ENCODE measurements at regions of chr16 and their contacts with region 1.

Region 1: GRCh38 chr16:31458844-31459721 is at the start of gene ARMC5:
- DNase-seq: peak; percentile 91 to 99 (median 95)
- ATAC-seq: peak; percentile 72
- H3K4me3 ChIP-seq: peak within 1 kb of the TSS; percentile 97
- H3K4me3 Mint-ChIP-seq: peak within 1 kb of the TSS; percentile 94
- H3K27ac ChIP-seq: peak within 1 kb of the TSS; percentile 98 to 99
- H3K27ac Mint-ChIP-seq: peak within 1 kb of the TSS; percentile 98
- H3K4me1 ChIP-seq: peaks cover 56% of the 10 kb centered on the region
- H3K4me1 Mint-ChIP-seq: peaks cover 49% of the 10 kb centered on the region
- H3K27me3 ChIP-seq: no peaks in the 10 kb centered on the region
- H3K27me3 Mint-ChIP-seq: no peaks in the 10 kb centered on the region
- CTCF ChIP-seq: peak; percentile 71
- total RNA-seq, gene ARMC5: 8.5 to 10.8 TPM

Region 2: GRCh38 chr16:31073968-31074813 is 384.9 kb before region 1 on chr16 and contains the starts of genes ZNF646 and ZNF668:
- CTCF ChIA-PET with region 1: no interaction called
- POLR2A ChIA-PET with region 1: interaction called, 28 read pairs
- intact Hi-C with region 1: loop called in 1 of 2 experiments (anchors 2 kb)
- DNase-seq: peak; percentile 94 to 100 (median 97)
- ATAC-seq: peak; percentile 81
- H3K4me3 ChIP-seq: peak within 1 kb of the TSS; percentile 96
- H3K4me3 Mint-ChIP-seq: peak within 1 kb of the TSS; percentile 98
- H3K27ac ChIP-seq: peak within 1 kb of the TSS; percentile 93 to 95
- H3K27ac Mint-ChIP-seq: peak within 1 kb of the TSS; percentile 92
- H3K4me1 ChIP-seq: peaks cover 35% of the 10 kb centered on the region
- H3K4me1 Mint-ChIP-seq: peaks cover 34% of the 10 kb centered on the region
- H3K27me3 ChIP-seq: no peaks in the 10 kb centered on the region
- H3K27me3 Mint-ChIP-seq: no peaks in the 10 kb centered on the region
- CTCF ChIP-seq: no peak
- total RNA-seq, gene ZNF646: 14.3 to 16.6 TPM
- total RNA-seq, gene ZNF668: 4.5 to 6.0 TPM

Region 3: GRCh38 chr16:31142109-31143010 is 316.7 kb before region 1 on chr16:
- CTCF ChIA-PET with region 1: interaction called, 9 read pairs
- POLR2A ChIA-PET with region 1: interaction called, 20 read pairs
- intact Hi-C with region 1: no loop called
- DNase-seq: peak; percentile 88 to 100 (median 96)
- ATAC-seq: peak; percentile 86
- H3K4me3 ChIP-seq: peak overlapping the region; percentile 41
- H3K4me3 Mint-ChIP-seq: peak overlapping the region; percentile 84
- H3K27ac ChIP-seq: peak overlapping the region; percentile 29 to 76
- H3K27ac Mint-ChIP-seq: peak overlapping the region; percentile 84
- H3K4me1 ChIP-seq: peaks cover 23% of the 10 kb centered on the region
- H3K4me1 Mint-ChIP-seq: peaks cover 13% of the 10 kb centered on the region
- H3K27me3 ChIP-seq: no peaks in the 10 kb centered on the region
- H3K27me3 Mint-ChIP-seq: peaks cover under 1% of the 10 kb centered on the region
- CTCF ChIP-seq: peak; percentile 79

Region 4: DNA sequence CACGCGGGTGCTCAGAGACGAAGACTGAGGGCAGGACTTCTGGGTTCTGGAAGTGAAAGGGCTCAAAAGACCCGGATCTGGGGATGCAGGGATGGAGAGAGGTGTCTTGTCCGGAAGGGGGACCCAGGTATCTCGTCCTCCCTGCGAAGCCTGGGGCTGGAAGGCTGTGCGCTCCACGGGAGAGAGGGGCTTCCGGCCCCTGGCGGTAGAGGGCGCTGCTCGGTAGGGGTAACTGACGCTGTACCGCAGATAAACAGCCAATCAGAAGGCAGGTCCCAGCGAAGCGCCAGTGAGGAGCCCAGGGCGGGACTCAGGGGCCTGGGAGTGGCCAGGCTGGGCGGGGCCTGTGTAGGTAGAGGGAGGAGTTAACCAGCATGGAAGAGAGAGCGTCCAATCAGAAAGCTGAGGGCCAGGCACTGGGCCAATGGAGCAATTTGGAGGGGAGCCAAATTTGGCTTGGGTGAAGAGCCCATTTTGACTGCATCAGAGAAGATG is 13.7 kb after region 1 on chr16:
- CTCF ChIA-PET with region 1: interaction called, 6 read pairs
- POLR2A ChIA-PET with region 1: interaction called, 69 read pairs
- intact Hi-C with region 1: loop called (anchors 1 to 2 kb)
- DNase-seq: peak in 5 of 14 experiments; percentile 38 to 72 (median 51)
- ATAC-seq: peak; percentile 23
- H3K4me3 ChIP-seq: no peak overlapping the region
- H3K4me3 Mint-ChIP-seq: peak overlapping the region; percentile 76
- H3K27ac ChIP-seq: no peak overlapping the region
- H3K27ac Mint-ChIP-seq: no peak overlapping the region
- H3K4me1 ChIP-seq: peaks cover 51% of the 10 kb centered on the region
- H3K4me1 Mint-ChIP-seq: peaks cover 25% of the 10 kb centered on the region
- H3K27me3 ChIP-seq: peaks cover 10 to 24% of the 10 kb centered on the region in 2 experiments
- H3K27me3 Mint-ChIP-seq: peaks cover 13% of the 10 kb centered on the region
- CTCF ChIP-seq: no peak

Region 5: DNA sequence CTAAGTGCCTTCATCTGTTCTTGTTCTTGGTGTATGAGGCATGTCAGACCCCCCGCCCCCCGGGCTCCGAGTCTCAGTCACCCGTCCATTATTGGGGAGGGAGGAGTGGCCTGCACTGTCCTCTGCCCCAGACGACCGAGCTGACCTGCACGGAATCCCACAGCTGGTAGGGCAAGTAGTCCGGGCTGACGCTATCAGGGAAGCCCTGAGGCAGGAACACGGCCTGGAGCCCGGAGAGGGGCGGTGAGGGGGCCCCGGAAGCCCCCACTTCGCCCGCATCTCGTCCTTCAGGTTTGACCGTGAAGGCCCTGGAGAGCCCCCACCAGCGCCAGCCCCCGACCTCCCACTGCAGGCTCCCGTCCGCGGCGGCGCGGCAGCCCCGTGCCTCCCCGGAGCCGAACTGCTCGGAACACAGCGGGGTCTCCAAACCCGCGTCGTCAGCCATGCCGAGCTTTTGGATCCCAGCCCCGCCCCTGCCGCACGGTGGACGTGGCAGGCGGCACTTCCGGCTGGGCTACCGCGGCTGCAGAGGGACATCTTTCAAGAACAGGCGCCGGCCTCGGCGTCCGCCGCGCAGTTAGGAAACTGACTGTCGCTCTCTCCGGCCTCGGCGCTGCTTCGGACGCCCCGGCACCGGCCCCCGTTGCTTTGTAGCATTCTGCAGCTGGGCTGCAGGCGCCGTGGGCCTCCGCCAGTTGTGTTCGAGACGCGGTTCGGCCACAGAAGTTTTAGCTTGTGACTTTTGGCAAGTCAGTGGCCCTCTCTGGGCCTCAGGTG is 49.0 kb after region 1 on chr16 and contains the start of gene RUSF1:
- CTCF ChIA-PET with region 1: interaction called, 4 read pairs
- POLR2A ChIA-PET with region 1: interaction called, 49 read pairs
- intact Hi-C with region 1: loop called (anchors 1 to 2 kb)
- DNase-seq: peak; percentile 65 to 89 (median 80)
- ATAC-seq: peak; percentile 87
- H3K4me3 ChIP-seq: peak within 1 kb of the TSS; percentile 97
- H3K4me3 Mint-ChIP-seq: peak within 1 kb of the TSS; percentile 94
- H3K27ac ChIP-seq: peak within 1 kb of the TSS; percentile 79 to 87
- H3K27ac Mint-ChIP-seq: peak within 1 kb of the TSS; percentile 98
- H3K4me1 ChIP-seq: peaks cover 40% of the 10 kb centered on the region
- H3K4me1 Mint-ChIP-seq: peaks cover 58% of the 10 kb centered on the region
- H3K27me3 ChIP-seq: no peaks in the 10 kb centered on the region
- H3K27me3 Mint-ChIP-seq: no peaks in the 10 kb centered on the region
- CTCF ChIP-seq: no peak
- total RNA-seq, gene RUSF1: 69.2 to 73.2 TPM

Region 6: DNA sequence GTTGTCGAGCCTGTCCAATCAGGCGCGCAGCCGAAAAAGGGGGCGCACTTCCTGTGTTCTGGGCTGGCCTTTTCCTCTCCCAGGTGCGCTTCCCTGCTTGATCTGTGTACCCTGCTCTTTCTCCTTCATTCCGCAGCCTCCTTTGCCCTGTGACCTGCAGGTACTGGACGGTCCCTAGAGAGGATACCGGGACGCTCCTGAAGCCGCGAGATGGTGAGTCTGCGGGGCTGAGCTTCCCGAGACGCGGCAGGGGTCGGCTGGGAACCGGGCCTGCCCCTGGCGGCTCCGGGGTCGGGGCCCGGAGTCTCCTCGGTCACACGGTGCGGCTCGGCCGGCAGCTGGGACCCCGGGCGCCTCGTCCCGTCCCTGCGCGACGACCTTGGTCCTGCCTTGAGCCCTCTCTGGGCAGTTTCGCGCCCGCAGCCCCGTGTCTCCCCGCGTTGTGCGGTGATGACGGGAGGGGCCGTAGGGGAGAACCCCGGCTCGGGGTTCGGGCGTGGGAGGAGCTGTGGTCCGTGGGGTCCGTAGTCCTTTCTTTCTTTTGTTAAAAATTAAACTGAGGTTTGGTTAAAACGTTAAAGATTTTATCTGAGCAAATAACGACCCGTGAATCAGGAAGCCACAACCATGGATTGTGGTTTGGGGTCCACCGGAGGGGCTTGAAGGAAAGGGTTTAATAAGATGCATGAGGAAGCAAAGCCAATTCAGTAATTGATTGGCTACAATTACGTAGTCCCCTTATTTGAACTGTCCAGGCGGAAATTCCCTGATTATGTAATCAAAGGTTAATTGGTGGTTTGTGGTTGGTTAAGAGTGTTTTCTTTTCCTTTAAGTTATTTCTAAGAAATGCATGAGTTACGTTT is 241.7 kb after region 1 on chr16:
- CTCF ChIA-PET with region 1: interaction called, 3 read pairs
- POLR2A ChIA-PET with region 1: interaction called, 9 read pairs
- intact Hi-C with region 1: loop called (anchors 1 to 5 kb)
- DNase-seq: peak; percentile 67 to 93 (median 80)
- ATAC-seq: peak; percentile 72
- H3K4me3 ChIP-seq: peak overlapping the region; percentile 89
- H3K4me3 Mint-ChIP-seq: peak overlapping the region; percentile 96
- H3K27ac ChIP-seq: peak overlapping the region; percentile 88 to 92
- H3K27ac Mint-ChIP-seq: peak overlapping the region; percentile 99
- H3K4me1 ChIP-seq: peaks cover 45% of the 10 kb centered on the region
- H3K4me1 Mint-ChIP-seq: peaks cover 37% of the 10 kb centered on the region
- H3K27me3 ChIP-seq: no peaks in the 10 kb centered on the region
- H3K27me3 Mint-ChIP-seq: no peaks in the 10 kb centered on the region
- CTCF ChIP-seq: no peak

Region 7: DNA sequence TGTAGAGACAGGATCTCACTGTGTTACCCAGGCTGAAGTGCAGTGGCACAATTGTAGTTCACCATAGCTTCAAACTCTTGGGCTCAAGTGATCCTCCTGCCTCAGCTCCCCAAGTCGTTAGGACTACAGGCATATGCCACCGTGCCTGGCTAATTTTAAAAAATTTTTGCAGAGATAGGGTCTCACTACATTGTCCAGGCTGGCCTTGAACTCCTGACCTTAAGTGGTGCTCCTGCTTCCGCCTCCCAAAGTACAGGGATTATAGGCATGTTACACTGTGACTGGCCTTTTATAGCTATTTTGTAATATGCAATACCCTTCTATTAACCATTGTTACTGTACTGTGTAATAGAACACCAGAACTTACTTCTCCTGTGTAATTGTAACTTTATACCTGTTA is 275.2 kb after region 1 on chr16:
- CTCF ChIA-PET with region 1: no interaction called
- POLR2A ChIA-PET with region 1: no interaction called
- intact Hi-C with region 1: no loop called
- DNase-seq: no peak
- ATAC-seq: no peak
- H3K4me3 ChIP-seq: no peak overlapping the region
- H3K4me3 Mint-ChIP-seq: no peak overlapping the region
- H3K27ac ChIP-seq: no peak overlapping the region
- H3K27ac Mint-ChIP-seq: no peak overlapping the region
- H3K4me1 ChIP-seq: no peaks in the 10 kb centered on the region
- H3K4me1 Mint-ChIP-seq: peaks cover 5% of the 10 kb centered on the region
- H3K27me3 ChIP-seq: no peaks in the 10 kb centered on the region
- H3K27me3 Mint-ChIP-seq: no peaks in the 10 kb centered on the region
- CTCF ChIP-seq: no peak

Region 8: GRCh38 chr16:31868691-31869167 is 409.6 kb after region 1 on chr16:
- CTCF ChIA-PET with region 1: interaction called, 27 read pairs
- POLR2A ChIA-PET with region 1: interaction called, 27 read pairs
- intact Hi-C with region 1: loop called (anchors 5 kb)
- DNase-seq: peak; percentile 68 to 88 (median 77)
- ATAC-seq: peak; percentile 35
- H3K4me3 ChIP-seq: peak overlapping the region; percentile 42
- H3K4me3 Mint-ChIP-seq: peak overlapping the region; percentile 78
- H3K27ac ChIP-seq: peak overlapping the region; percentile 49 to 92
- H3K27ac Mint-ChIP-seq: peak overlapping the region; percentile 74
- H3K4me1 ChIP-seq: peaks cover 43% of the 10 kb centered on the region
- H3K4me1 Mint-ChIP-seq: peaks cover 39% of the 10 kb centered on the region
- H3K27me3 ChIP-seq: no peaks in the 10 kb centered on the region
- H3K27me3 Mint-ChIP-seq: no peaks in the 10 kb centered on the region
- CTCF ChIP-seq: peak; percentile 94